HAP-1 (cell line): ENCODE measurements at regions of chr5 and their contacts with region 1.

Region 1: GRCh38 chr5:95858661-95859326 is 36.3 kb upstream of the GLRX start:
- DNase-seq: peak; percentile 86 to 94
- H3K4me3 ChIP-seq: no peak overlapping the region
- H3K4me1 ChIP-seq: peaks cover 19% of the 10 kb centered on the region
- H3K27me3 ChIP-seq: no peaks in the 10 kb centered on the region

Region 2: GRCh38 chr5:95417971-95418370 is 440.8 kb before region 1 on chr5:
- in situ Hi-C with region 1: no loop called
- DNase-seq: no peak
- H3K4me3 ChIP-seq: no peak overlapping the region
- H3K4me1 ChIP-seq: no peaks in the 10 kb centered on the region
- H3K27me3 ChIP-seq: 0 out of 2 replicates have a peak, but pooled peaks cover 2% of the 10 kb centered on the region

Region 3: GRCh38 chr5:95961617-95962474 is 103.1 kb after region 1 on chr5 and contains the start of gene ELL2:
- in situ Hi-C with region 1: loop called (anchors 10 kb)
- DNase-seq: peak; percentile 93 to 98
- H3K4me3 ChIP-seq: peak within 1 kb of the TSS; percentile 87
- H3K4me1 ChIP-seq: peaks cover 26% of the 10 kb centered on the region
- H3K27me3 ChIP-seq: no peaks in the 10 kb centered on the region

Region 4: GRCh38 chr5:96198356-96199058 is 339.7 kb after region 1 on chr5:
- in situ Hi-C with region 1: no loop called
- DNase-seq: no peak
- H3K4me3 ChIP-seq: no peak overlapping the region
- H3K4me1 ChIP-seq: no peaks in the 10 kb centered on the region
- H3K27me3 ChIP-seq: no peaks in the 10 kb centered on the region

Region 5: DNA sequence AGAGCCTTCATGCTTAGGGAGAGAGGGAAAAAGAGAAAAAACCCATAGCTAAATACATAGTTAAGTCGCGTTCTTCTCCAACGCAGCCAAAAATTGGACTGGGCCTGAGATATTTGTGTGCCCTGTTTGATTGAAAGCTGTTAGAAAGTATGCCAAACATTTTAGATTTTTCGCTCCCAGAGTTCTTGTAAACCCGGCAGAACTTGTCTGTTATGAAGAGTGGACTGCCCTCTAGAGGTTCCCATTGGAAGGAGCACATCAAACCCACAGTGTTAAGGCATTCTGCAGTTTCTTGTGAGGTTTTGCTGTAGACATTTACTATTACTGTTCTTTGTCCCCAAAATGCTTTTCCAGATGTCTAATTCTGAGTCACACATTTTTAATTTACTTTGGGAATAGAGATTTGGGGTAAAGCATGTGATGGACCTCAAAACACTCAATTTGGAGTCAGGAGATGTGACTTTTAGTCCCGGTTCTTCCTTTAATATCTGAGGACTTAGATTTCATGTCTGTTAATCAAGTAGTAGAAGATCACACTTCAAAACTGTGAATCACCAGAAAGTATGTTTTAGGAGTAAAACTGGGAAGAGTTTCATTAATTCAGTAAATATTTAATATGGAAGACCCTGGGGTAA is 477.7 kb after region 1 on chr5:
- in situ Hi-C with region 1: loop called (anchors 5 kb)
- DNase-seq: peak; percentile 75 to 82
- H3K4me3 ChIP-seq: no peak overlapping the region
- H3K4me1 ChIP-seq: peaks cover 2% of the 10 kb centered on the region; the same call in 1 of the 2 replicates
- H3K27me3 ChIP-seq: peaks cover 7% of the 10 kb centered on the region; the same call in 1 of the 2 replicates

Region 6: DNA sequence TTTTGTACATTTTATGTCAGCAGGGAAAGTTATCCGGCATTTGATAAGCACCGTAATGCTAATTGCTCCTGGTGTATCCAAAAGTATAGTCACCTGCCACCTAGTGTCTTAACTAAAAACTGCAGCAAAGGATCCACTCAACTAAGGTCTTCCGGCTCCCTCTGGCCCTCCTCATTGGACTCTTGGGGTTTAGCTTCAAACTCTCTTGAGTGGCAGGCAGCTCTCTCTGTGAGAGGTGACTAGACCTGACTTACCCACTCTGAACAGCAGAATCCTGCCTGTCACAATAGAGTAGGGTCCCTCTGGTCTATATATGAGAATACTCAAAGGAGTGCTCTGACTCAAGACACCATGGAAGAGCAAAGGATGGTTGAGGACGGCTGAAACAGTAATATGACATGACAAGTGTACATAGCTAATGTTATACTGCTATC is 743.0 kb after region 1 on chr5:
- in situ Hi-C with region 1: loop called (anchors 25 kb)
- DNase-seq: peak; percentile 49 to 78
- H3K4me3 ChIP-seq: no peak overlapping the region
- H3K4me1 ChIP-seq: no peaks in the 10 kb centered on the region
- H3K27me3 ChIP-seq: peaks cover 8% of the 10 kb centered on the region